PC-9 (cell line): ENCODE measurements at regions of chr1 and their contacts with region 1.

Region 1: GRCh38 chr1:170929835-170930554 is 5.3 kb upstream of the MROH9 start:
- DNase-seq: peak; percentile 2 to 45
- H3K4me3 ChIP-seq: no peak overlapping the region
- H3K27ac ChIP-seq: no peak overlapping the region
- H3K4me1 ChIP-seq: no peaks in the 10 kb centered on the region
- H3K27me3 ChIP-seq: no peaks in the 10 kb centered on the region
- CTCF ChIP-seq: peak; percentile 80

Region 2: GRCh38 chr1:169928438-169929209 is 1001.4 kb before region 1 on chr1:
- CTCF ChIA-PET with region 1: no interaction called
- POLR2A ChIA-PET with region 1: no interaction called
- intact Hi-C with region 1: loop called (anchors 5 kb)
- DNase-seq: peak in 1 of 2 experiments; percentile 54
- H3K4me3 ChIP-seq: no peak overlapping the region
- H3K27ac ChIP-seq: no peak overlapping the region
- H3K4me1 ChIP-seq: peaks cover 12% of the 10 kb centered on the region
- H3K27me3 ChIP-seq: no peaks in the 10 kb centered on the region
- CTCF ChIP-seq: peak; percentile 83

Region 3: GRCh38 chr1:170010443-170010842 is 919.6 kb before region 1 on chr1:
- CTCF ChIA-PET with region 1: no interaction called
- POLR2A ChIA-PET with region 1: no interaction called
- intact Hi-C with region 1: loop called (anchors 5 kb)
- DNase-seq: no peak
- H3K4me3 ChIP-seq: no peak overlapping the region
- H3K27ac ChIP-seq: no peak overlapping the region
- H3K4me1 ChIP-seq: no peaks in the 10 kb centered on the region
- H3K27me3 ChIP-seq: no peaks in the 10 kb centered on the region
- CTCF ChIP-seq: peak; percentile 81

Region 4: GRCh38 chr1:170085091-170085490 is 844.9 kb before region 1 on chr1:
- CTCF ChIA-PET with region 1: no interaction called
- POLR2A ChIA-PET with region 1: no interaction called
- intact Hi-C with region 1: loop called (anchors 5 kb)
- DNase-seq: no peak
- H3K4me3 ChIP-seq: no peak overlapping the region
- H3K27ac ChIP-seq: no peak overlapping the region
- H3K4me1 ChIP-seq: no peaks in the 10 kb centered on the region
- H3K27me3 ChIP-seq: no peaks in the 10 kb centered on the region
- CTCF ChIP-seq: no peak

Region 5: DNA sequence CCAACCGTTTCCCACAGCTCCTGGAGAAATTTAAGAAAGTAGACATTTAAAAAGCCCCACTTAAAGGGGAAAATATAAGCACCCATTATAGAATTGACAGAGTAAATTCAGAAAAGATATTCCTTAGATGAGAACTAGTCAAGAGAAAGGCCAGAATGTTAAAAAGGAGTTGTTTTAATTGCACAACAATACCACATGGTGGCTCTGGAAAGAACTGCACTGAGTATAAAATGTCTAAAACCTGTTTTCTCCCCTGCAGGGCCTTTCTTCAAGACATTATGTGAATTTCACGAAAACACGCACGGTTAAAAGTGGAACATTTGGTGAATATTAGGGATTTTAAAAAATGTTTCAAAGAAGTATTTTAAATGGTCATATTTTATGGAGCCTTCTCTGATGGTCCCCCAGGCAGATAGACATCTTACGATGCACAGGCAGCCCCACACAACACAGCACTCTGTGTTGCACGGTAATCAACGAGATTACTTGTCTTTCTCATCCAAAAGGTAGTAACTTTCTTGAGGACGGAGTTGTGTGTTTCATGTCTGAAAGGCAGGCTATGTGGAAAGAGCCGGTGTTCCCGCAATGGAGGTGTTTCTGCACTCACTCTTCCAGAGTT is 164.2 kb before region 1 on chr1:
- CTCF ChIA-PET with region 1: no interaction called
- POLR2A ChIA-PET with region 1: no interaction called
- intact Hi-C with region 1: loop called (anchors 10 kb)
- DNase-seq: no peak
- H3K4me3 ChIP-seq: no peak overlapping the region
- H3K27ac ChIP-seq: no peak overlapping the region
- H3K4me1 ChIP-seq: no peaks in the 10 kb centered on the region
- H3K27me3 ChIP-seq: no peaks in the 10 kb centered on the region
- CTCF ChIP-seq: peak; percentile 37; the same call in 1 of the 2 replicates

Region 6: DNA sequence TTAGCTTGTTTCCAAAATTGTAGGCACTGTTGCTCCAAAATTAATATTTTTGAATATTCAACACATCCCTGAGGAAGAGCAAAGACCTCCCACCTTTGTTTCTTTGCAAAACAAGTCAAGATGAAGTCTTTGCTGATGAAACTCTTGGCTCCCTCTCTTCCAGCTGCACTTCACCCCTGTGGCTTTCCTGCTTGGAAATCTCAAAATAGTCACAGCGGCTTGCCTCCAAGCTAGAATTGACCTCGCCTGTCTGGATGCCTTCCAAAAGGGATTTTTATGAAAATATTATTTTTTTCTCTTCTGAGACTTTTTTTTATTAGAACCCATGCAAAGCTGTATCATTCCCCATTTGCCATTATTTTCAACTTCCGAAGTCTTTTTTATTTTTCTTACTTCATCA is 65.8 kb before region 1 on chr1:
- CTCF ChIA-PET with region 1: no interaction called
- POLR2A ChIA-PET with region 1: no interaction called
- intact Hi-C with region 1: no loop called
- DNase-seq: no peak
- H3K4me3 ChIP-seq: no peak overlapping the region
- H3K27ac ChIP-seq: no peak overlapping the region
- H3K4me1 ChIP-seq: no peaks in the 10 kb centered on the region
- H3K27me3 ChIP-seq: no peaks in the 10 kb centered on the region
- CTCF ChIP-seq: no peak